SK-N-SH (cell line): ENCODE measurements at regions of chr17 and their contacts with region 1.

Region 1: DNA sequence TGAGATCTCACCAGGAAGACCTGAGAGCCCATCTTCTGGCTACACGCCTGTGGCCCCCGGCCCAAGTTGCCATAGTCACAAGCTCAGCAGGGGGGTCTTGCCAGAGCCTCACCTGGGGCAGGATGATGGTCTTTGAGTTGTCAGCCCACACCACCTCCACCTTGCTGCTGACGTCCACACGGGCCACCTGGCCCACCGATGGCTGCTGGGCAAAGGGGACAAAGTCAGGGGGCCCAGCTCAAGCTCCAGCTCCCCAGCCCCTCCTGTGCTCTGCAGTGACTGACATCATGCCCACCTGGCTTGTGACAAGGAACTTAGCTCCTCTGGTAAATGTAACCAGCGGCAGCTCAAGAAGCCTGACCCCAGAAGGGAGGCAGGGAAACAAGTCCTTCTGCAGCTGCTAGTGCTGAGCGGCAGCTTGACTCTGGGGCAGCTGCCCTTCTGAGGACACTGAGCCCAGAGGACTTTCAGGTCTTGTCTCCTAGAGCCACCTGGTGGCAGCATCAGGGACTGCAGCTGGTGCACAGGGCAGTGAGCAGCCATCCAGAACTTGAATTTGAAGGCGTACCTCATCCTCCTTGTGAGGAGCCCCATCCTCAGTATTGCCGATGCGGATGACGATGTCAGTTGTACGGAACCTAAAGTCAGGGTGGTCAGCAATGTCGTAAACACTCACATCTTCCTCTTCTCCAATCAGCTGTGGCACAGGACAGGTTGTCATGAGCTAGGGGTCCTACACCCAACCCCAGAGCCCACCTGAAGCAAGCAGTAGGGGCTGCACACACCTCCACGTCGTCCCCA is 13.5 kb downstream of the SPHK1 start:
- DNase-seq: peak; percentile 92
- H3K4me3 ChIP-seq: no peak overlapping the region; a peak in 1 of 4 replicates
- H3K27ac ChIP-seq: no peak overlapping the region; a peak in 1 of 4 replicates
- H3K4me1 ChIP-seq: peaks cover 0 to 3% of the 10 kb centered on the region in 2 experiments; a peak in 1 of 4 replicates
- H3K27me3 ChIP-seq: no peaks in the 10 kb centered on the region
- CTCF ChIP-seq: peak; percentile 99
- EP300 ChIP-seq: no peak
- RAD21 ChIP-seq: peak; percentile 96

Region 2: GRCh38 chr17:76188213-76189015 is 209.5 kb before region 1 on chr17:
- CTCF ChIA-PET with region 1: no interaction called
- POLR2A ChIA-PET with region 1: no interaction called
- DNase-seq: no peak
- H3K4me3 ChIP-seq: no peak overlapping the region
- H3K27ac ChIP-seq: no peak overlapping the region
- H3K4me1 ChIP-seq: peaks cover 0 to 6% of the 10 kb centered on the region in 2 experiments; a peak in 2 of 4 replicates
- H3K27me3 ChIP-seq: no peaks in the 10 kb centered on the region
- CTCF ChIP-seq: no peak
- EP300 ChIP-seq: no peak
- RAD21 ChIP-seq: no peak

Region 3: GRCh38 chr17:76314392-76315227 is 83.3 kb before region 1 on chr17:
- CTCF ChIA-PET with region 1: interaction called, 348 read pairs
- POLR2A ChIA-PET with region 1: interaction called, 3 read pairs
- DNase-seq: no peak
- H3K4me3 ChIP-seq: no peak overlapping the region
- H3K27ac ChIP-seq: peak overlapping the region in 1 of 2 experiments; percentile 26; a peak in 1 of 4 replicates
- H3K4me1 ChIP-seq: peaks cover 0 to 7% of the 10 kb centered on the region in 2 experiments; a peak in 1 of 4 replicates
- H3K27me3 ChIP-seq: no peaks in the 10 kb centered on the region
- CTCF ChIP-seq: no peak
- EP300 ChIP-seq: no peak
- RAD21 ChIP-seq: no peak

Region 4: DNA sequence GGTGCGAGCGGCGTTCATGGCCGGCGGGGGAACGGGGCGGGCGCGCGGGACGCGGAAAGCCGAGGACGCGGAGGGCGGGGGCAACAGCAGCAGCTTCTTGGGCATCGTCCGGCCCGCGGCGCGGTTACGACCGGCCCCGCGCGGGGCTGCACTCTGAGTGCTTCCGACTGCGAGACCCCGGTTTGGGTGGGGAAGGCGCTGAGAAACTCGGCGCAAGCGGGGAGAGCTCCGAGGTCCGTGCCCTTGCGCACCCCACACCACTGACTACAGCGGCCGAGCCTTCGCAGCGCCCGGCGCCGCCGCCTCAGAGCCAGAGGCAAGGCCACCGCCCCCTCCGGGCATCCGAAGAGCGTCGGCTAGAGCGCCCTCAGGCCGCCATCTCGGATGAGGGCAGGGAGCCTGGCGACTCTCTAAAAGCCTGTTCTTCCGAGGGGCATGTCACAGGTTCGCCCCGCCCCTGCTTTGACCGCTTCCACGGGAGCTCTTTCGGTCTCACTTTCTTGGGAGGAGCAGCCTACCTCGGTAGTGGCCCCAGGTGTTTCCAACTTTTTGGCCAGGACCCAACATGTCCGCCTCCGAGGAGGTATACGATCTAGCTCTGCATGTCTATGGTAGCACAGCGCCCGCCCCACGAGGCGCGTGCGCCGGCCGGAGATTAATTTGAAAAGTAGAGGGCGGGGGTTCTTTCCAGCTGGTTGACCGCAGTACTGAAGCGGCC is 44.1 kb before region 1 on chr17 and contains the start of gene PRPSAP1:
- CTCF ChIA-PET with region 1: interaction called, 30 read pairs
- POLR2A ChIA-PET with region 1: interaction called, 4 read pairs
- DNase-seq: peak; percentile 97
- H3K4me3 ChIP-seq: peak within 1 kb of the TSS; percentile 65 to 87
- H3K27ac ChIP-seq: peak within 1 kb of the TSS; percentile 83 to 90
- H3K4me1 ChIP-seq: peaks cover 7 to 10% of the 10 kb centered on the region in 2 experiments; a peak in 2 of 4 replicates
- H3K27me3 ChIP-seq: no peaks in the 10 kb centered on the region
- CTCF ChIP-seq: peak; percentile 21
- EP300 ChIP-seq: 0 out of 4 replicates have a peak, but pooled peaks of 1 of the 2 experiments have one; percentile 19
- RAD21 ChIP-seq: no peak
- polyA plus RNA-seq, gene PRPSAP1: 118 and 125 TPM in 2 replicates

Region 5: DNA sequence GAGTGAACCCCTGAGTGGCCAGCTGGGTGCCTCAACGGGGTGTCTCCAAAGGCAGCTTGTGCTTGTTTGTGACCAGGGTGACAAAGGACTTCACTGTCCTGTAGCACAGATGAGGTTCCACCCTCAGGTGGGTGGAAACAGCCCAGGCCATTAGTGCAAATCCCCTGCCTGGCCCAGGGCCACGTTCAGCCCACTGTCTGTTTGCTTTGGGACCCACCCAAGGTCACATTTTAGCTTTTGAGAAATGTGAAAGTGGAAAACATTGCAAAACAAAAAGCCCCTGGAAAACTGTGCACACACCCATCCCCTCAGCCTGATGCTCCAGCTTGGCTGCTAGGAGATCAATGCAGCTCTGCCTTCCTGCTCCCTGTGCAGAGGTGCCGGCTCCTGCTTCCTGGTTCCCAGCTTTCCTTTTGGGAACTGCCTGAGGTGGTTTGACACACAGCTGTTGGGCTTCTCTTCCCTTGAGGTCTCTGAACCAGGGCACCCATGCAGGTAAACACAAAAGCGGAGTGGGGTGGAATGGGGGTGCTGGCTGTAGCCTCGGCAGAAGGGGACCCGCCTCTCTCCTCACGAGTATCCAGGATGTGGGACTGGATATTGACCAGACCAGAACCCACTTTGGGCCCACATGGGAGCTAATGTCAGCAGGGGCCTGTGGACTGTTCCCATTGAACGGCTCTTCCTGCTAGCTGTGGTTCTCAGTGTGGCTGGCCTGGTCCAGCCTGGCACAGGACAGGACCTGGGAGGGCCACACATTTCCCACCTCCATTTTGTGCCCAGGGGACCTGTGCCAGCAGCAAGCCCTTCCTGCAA is 21.4 kb before region 1 on chr17:
- CTCF ChIA-PET with region 1: interaction called, 312 read pairs
- POLR2A ChIA-PET with region 1: no interaction called
- DNase-seq: no peak
- H3K4me3 ChIP-seq: no peak overlapping the region
- H3K27ac ChIP-seq: no peak overlapping the region
- H3K4me1 ChIP-seq: peaks cover 0 to 3% of the 10 kb centered on the region in 2 experiments; a peak in 1 of 4 replicates
- H3K27me3 ChIP-seq: no peaks in the 10 kb centered on the region
- CTCF ChIP-seq: no peak
- EP300 ChIP-seq: no peak
- RAD21 ChIP-seq: no peak

Region 6: GRCh38 chr17:76414334-76415295 is 16.7 kb after region 1 on chr17:
- CTCF ChIA-PET with region 1: interaction called, 41 read pairs
- POLR2A ChIA-PET with region 1: no interaction called
- DNase-seq: peak; percentile 94
- H3K4me3 ChIP-seq: no peak overlapping the region
- H3K27ac ChIP-seq: peak overlapping the region in 1 of 2 experiments; percentile 77; a peak in 2 of 4 replicates
- H3K4me1 ChIP-seq: peaks cover 0 to 44% of the 10 kb centered on the region in 2 experiments; a peak in 2 of 4 replicates
- H3K27me3 ChIP-seq: no peaks in the 10 kb centered on the region
- CTCF ChIP-seq: no peak
- EP300 ChIP-seq: peak in 1 of 2 experiments; percentile 78; a peak in 1 of 4 replicates
- RAD21 ChIP-seq: peak; percentile 24; the same call in 1 of the 2 replicates

Region 7: GRCh38 chr17:76458580-76459490 is 60.9 kb after region 1 on chr17:
- CTCF ChIA-PET with region 1: interaction called, 41 read pairs
- POLR2A ChIA-PET with region 1: no interaction called
- DNase-seq: peak; percentile 79
- H3K4me3 ChIP-seq: no peak overlapping the region
- H3K27ac ChIP-seq: no peak overlapping the region
- H3K4me1 ChIP-seq: no peaks in the 10 kb centered on the region; a peak in 1 of 4 replicates
- H3K27me3 ChIP-seq: no peaks in the 10 kb centered on the region
- CTCF ChIP-seq: peak; percentile 51
- EP300 ChIP-seq: no peak
- RAD21 ChIP-seq: peak; percentile 81

Region 8: DNA sequence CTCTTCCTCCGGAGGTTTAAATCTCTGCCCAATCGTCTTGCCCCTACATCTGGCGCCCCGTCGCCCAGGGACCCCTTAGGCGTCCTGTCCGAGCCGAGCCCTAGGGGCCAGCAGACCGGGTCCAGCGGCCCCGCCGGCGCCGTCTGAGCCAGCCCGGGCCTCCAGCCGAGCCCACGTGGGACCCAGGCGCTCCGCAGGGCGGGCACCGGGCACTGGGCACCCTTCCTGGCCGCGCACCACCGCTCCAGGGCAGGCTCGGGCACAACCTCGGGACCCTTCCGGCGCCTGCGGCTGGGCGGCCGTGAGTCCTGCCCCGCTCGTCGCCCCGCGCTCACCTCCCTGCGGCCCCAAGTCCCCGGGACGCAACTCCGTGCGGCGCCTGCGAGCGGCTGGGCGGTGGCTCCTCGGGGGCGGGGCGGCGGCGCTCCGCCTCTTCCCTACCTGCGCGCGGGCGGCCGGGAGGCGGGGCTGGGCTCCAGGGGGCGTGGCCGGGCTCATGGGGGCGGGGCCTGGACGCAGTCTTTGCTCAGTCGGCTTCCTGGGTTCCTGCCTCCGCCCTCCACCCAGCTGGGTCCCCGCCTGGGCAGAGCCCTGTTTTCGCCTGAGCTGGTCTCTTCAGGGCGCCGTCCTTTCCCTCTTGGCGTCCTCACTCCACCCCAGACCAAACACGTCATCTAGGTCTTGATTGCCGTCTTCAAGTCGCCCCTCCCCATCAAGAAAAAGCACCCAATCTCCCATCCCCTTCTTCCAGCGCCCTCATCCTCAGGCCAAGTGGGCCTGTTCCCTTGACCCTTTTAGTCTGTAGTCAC is 103.3 kb after region 1 on chr17 and contains the start of gene RHBDF2:
- CTCF ChIA-PET with region 1: interaction called, 32 read pairs
- POLR2A ChIA-PET with region 1: no interaction called
- DNase-seq: peak; percentile 97
- H3K4me3 ChIP-seq: peak within 1 kb of the TSS; percentile 65 to 78
- H3K27ac ChIP-seq: peak within 1 kb of the TSS in 1 of 2 experiments; percentile 30; a peak in 1 of 4 replicates
- H3K4me1 ChIP-seq: peaks cover 21 to 50% of the 10 kb centered on the region in 2 experiments; a peak in 3 of 4 replicates
- H3K27me3 ChIP-seq: no peaks in the 10 kb centered on the region
- CTCF ChIP-seq: no peak
- EP300 ChIP-seq: no peak
- RAD21 ChIP-seq: no peak
- polyA plus RNA-seq, gene RHBDF2: 14.0 and 16.1 TPM in 2 replicates